Heart left ventricle (tissue), 16 donors: ENCODE measurements at regions of chr18 and their contacts with region 1.

Region 1: DNA sequence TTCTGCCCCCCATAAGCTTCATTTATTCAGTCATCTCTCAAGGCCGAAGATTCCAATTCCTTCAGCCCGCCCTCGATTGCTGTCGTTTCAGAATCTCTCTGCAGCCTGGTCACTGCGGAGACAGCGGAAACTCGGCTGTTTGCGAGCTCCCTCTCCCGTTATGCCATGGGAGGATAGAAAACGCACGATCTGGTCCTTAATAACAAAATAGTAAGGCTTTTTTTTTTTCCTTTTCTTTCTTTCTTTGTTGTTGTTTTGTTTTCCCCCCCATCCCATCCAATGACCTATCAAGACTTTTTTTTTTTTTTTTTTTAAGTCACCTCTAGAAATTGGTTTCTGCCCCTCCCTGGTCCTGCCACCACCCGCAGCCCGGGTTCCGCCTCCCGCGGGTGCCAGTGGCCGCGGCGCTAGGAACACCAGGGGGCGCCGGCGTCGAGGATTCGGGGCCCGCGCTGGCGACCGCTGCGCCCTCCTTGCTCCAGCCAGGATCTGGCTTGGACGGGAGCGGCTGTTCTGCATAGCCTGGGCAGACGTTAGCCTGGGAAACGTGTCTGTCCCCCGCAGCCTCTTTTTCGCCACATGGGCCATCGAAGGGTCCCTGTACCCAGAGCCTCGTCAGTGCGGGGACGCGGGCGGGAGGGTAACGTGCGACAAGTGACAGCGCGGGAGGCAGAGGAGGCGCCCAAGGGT is 10.1 kb downstream of the CPLX4 start:
- DNase-seq: peak; percentile 63 to 88 (median 75)
- ATAC-seq: peak; percentile 58 to 99 (median 96)
- H3K4me3 ChIP-seq: peak overlapping the region in 8 of 12 donors; percentile 25 to 49 (median 34)
- H3K27ac ChIP-seq: no peak overlapping the region
- H3K4me1 ChIP-seq: peaks cover 0 to 10% (median 4%) of the 10 kb centered on the region in 12 donors
- H3K27me3 ChIP-seq: peaks cover 0 to 42% (median 11%) of the 10 kb centered on the region in 9 donors
- CTCF ChIP-seq: peak; percentile 72 to 92 (median 79)
- POLR2A ChIP-seq: no peak

Region 2: DNA sequence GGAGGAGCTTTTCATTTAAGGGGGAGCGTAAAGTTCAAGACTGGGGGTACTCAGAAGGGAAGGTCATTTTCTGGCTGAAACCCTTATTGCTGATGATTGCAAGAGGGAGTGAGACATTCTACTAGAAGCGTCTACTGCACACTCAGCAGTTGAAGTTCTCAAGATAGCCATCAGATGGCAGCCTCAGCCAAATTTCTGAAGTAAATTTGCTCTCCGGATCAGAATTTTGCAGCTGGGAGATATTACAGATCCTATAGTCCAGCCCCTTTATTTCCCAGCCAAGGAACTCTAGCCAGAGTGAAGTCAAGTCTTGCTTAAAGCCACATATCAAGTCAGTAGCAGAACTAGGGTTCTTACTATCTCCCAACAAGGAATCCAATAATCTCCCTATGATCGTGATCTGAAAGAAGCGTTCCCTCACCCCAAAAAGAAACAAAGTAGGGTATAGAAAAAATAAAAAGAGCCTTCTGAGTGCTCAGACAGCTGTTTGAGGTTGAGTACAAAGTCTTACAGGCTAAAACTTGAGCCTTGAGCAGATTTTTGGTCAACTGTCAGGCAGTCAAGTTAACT is 59.1 kb before region 1 on chr18:
- intact Hi-C with region 1: loop called in 2 of 10 experiments (anchors 2 to 10 kb)
- DNase-seq: no peak
- ATAC-seq: peak in 2 of 4 donors; percentile 46 to 80
- H3K4me3 ChIP-seq: no peak overlapping the region
- H3K27ac ChIP-seq: no peak overlapping the region
- H3K4me1 ChIP-seq: no peaks in the 10 kb centered on the region
- H3K27me3 ChIP-seq: peaks cover 0 to 39% (median 24%) of the 10 kb centered on the region in 9 donors
- CTCF ChIP-seq: peak; percentile 48 to 74 (median 63)
- POLR2A ChIP-seq: no peak

Region 3: GRCh38 chr18:59823596-59824195 is 515.3 kb after region 1 on chr18:
- intact Hi-C with region 1: loop called in 3 of 10 experiments (anchors 1 to 10 kb)
- DNase-seq: peak in 4 of 5 donors; percentile 46 to 62 (median 58)
- ATAC-seq: peak; percentile 32 to 80 (median 74)
- H3K4me3 ChIP-seq: no peak overlapping the region
- H3K27ac ChIP-seq: no peak overlapping the region
- H3K4me1 ChIP-seq: peaks cover 0 to 3% (median 0%) of the 10 kb centered on the region in 12 donors
- H3K27me3 ChIP-seq: peaks cover 0 to 7% (median 0%) of the 10 kb centered on the region in 9 donors
- CTCF ChIP-seq: peak; percentile 63 to 83 (median 76)
- POLR2A ChIP-seq: no peak